Endothelial cell of umbilical vein (primary cell): ENCODE measurements at regions of chr1 and their contacts with region 1.

Region 1: DNA sequence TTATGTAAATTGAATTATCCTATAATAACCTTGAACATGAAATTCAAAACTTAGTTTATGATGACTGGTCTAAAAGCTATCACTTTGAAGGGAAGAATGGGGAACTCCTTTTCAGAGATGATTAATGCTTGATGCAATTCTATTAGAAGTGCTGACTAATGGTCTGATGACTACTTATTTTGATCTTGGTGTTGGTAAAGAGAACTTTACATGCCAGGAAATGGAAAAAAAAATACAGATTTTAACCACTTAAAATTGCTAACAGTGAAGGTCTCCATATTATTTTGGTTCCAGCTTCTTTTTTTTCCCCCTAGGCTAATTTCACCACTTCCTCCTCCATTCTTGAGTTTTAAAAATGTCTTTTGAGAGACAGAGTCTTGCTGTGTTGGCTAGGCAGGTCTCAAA is 22.9 kb downstream of the S1PR1 start:
- DNase-seq: peak; percentile 83
- H3K4me3 ChIP-seq: no peak overlapping the region
- H3K27ac ChIP-seq: peak overlapping the region; percentile 85
- H3K4me1 ChIP-seq: peaks cover 53% of the 10 kb centered on the region
- H3K27me3 ChIP-seq: no peaks in the 10 kb centered on the region
- CTCF ChIP-seq: no peak
- POLR2A ChIP-seq: no peak

Region 2: DNA sequence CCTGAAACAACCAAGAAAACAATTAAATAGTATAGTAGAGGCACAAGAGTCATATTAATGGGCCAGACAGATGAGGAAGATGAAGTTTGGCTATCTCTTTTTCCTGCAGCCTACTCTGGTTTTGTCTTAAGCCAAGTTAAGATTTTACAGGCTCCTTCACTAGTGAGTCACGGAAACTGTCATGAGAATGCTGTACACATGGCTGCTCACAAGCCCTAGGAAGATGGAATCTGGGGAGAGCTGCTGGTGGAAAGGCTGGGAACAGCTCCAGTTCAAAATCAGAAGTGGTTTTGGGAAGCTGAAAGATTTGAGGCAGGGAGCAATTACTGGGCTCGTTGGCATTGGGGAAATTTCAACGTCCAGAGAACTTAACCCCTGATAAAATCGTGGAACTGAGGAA is 69.3 kb before region 1 on chr1:
- CTCF ChIA-PET with region 1: no interaction called
- POLR2A ChIA-PET with region 1: no interaction called
- dilution Hi-C with region 1: no loop called
- intact Hi-C with region 1: no loop called
- DNase-seq: no peak
- H3K4me3 ChIP-seq: no peak overlapping the region
- H3K27ac ChIP-seq: no peak overlapping the region
- H3K4me1 ChIP-seq: peaks cover 25% of the 10 kb centered on the region
- H3K27me3 ChIP-seq: no peaks in the 10 kb centered on the region
- CTCF ChIP-seq: no peak
- POLR2A ChIP-seq: no peak

Region 3: GRCh38 chr1:101244842-101245241 is 14.9 kb before region 1 on chr1:
- CTCF ChIA-PET with region 1: interaction called, 4 read pairs
- POLR2A ChIA-PET with region 1: interaction called, 11 read pairs
- dilution Hi-C with region 1: no loop called
- intact Hi-C with region 1: loop called (anchors 1 kb)
- DNase-seq: no peak
- H3K4me3 ChIP-seq: no peak overlapping the region
- H3K27ac ChIP-seq: no peak overlapping the region
- H3K4me1 ChIP-seq: peaks cover 46% of the 10 kb centered on the region
- H3K27me3 ChIP-seq: no peaks in the 10 kb centered on the region
- CTCF ChIP-seq: no peak
- POLR2A ChIP-seq: no peak

Region 4: GRCh38 chr1:101278845-101279244 is 19.1 kb after region 1 on chr1:
- CTCF ChIA-PET with region 1: interaction called, 3 read pairs
- POLR2A ChIA-PET with region 1: no interaction called
- dilution Hi-C with region 1: no loop called
- intact Hi-C with region 1: loop called (anchors 2 kb)
- DNase-seq: no peak
- H3K4me3 ChIP-seq: no peak overlapping the region
- H3K27ac ChIP-seq: no peak overlapping the region
- H3K4me1 ChIP-seq: peaks cover 11% of the 10 kb centered on the region
- H3K27me3 ChIP-seq: no peaks in the 10 kb centered on the region
- CTCF ChIP-seq: no peak
- POLR2A ChIP-seq: no peak